Common myeloid progenitor, CD34-positive (primary cell): ENCODE measurements at regions of chr2 and their contacts with region 1.

Region 1: GRCh38 chr2:85826990-85827878 is 61.6 kb downstream of the ST3GAL5 start:
- DNase-seq: peak; percentile 66 to 84 (median 79)
- H3K4me3 ChIP-seq: peak overlapping the region in 1 of 7 experiments; percentile 32
- H3K27ac ChIP-seq: no peak overlapping the region
- H3K4me1 ChIP-seq: peaks cover 0 to 6% (median 5%) of the 10 kb centered on the region in 4 experiments
- H3K27me3 ChIP-seq: no peaks in the 10 kb centered on the region

Region 2: DNA sequence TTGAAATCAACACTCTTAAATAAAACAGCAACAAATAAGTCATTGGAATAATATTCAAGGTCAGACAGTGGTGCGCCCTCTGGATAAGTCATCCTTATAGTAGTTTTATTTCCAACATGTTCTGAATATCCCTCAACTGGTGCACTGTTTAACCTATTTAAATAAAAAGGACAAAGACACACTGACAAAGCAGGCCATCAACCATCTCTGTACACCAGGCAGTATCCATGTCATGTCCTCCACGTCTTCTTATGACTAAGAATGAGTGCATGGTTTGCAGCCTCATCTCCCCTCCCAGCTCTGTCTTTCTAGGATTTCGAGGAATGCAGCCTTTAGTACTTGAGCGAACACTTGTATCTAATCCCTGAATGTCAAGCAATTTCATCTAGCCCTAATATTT is 19.2 kb after region 1 on chr2:
- CTCF ChIA-PET with region 1: interaction called, 11 read pairs
- POLR2A ChIA-PET with region 1: no interaction called
- DNase-seq: no peak
- H3K4me3 ChIP-seq: no peak overlapping the region
- H3K27ac ChIP-seq: no peak overlapping the region
- H3K4me1 ChIP-seq: no peaks in the 10 kb centered on the region
- H3K27me3 ChIP-seq: no peaks in the 10 kb centered on the region

Region 3: GRCh38 chr2:85888684-85889626 is 61.7 kb after region 1 on chr2 and contains the start of gene ST3GAL5:
- CTCF ChIA-PET with region 1: interaction called, 68 read pairs
- POLR2A ChIA-PET with region 1: interaction called, 3 read pairs
- DNase-seq: peak; percentile 87 to 95 (median 94)
- H3K4me3 ChIP-seq: peak within 1 kb of the TSS; percentile 53 to 88 (median 84)
- H3K27ac ChIP-seq: peak within 1 kb of the TSS in 1 of 2 experiments; percentile 79
- H3K4me1 ChIP-seq: peaks cover 23 to 71% (median 60%) of the 10 kb centered on the region in 4 experiments
- H3K27me3 ChIP-seq: peaks cover 0 to 1% (median 0%) of the 10 kb centered on the region in 5 experiments

Region 4: DNA sequence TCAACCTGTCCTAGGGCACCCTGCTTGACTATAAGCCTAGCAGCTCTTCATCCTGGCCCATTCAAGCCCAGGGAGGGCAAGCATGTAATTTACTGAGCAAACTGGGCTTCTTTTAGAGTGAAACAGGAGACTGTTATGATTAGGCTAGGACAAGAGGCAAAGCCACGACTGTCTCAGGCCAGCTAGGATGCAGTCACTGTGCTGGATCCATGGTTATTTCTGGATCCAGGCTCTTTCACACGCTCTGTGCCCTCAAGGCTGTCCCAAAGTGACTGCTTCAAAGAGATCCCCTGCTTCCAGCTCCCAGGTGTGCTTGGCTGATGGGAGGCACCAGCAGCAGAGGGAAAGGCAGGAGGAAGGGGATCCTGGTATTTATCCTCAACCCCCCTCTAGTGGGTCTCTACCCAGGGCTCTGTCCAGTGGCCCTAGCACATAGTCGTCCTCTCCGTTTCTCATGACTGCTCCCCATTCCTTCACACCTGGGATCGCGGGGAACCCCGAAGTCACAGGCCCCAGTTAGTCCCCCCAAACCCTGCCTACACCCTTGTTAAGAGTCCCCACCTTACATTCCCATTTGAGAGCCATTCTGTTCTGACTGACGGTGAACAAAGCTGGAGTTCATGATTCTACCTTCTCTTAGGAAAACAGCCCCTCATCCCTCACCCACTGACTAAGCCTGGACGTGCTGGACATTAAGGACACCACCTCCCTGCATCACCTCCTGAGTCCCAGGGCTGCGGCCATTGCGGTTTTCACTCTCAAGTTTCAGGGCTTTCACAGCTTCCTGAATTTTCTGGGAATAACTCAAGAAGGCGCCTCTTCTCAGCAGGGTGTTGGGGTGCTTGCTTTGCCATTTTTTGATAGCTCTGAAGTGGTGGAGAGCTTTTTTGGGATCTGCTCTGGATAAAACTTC is 215.3 kb after region 1 on chr2:
- CTCF ChIA-PET with region 1: interaction called, 36 read pairs
- POLR2A ChIA-PET with region 1: no interaction called
- DNase-seq: no peak
- H3K4me3 ChIP-seq: no peak overlapping the region
- H3K27ac ChIP-seq: no peak overlapping the region
- H3K4me1 ChIP-seq: peaks cover 14 to 22% (median 18%) of the 10 kb centered on the region in 4 experiments
- H3K27me3 ChIP-seq: no peaks in the 10 kb centered on the region